HEK293 (cell line): ENCODE measurements at regions of chr1 and their contacts with region 1.

Region 1: GRCh38 chr1:89358287-89358893 is 5.5 kb upstream of the GBP6 start:
- H3K4me3 ChIP-seq: no peak overlapping the region
- H3K27ac ChIP-seq: no peak overlapping the region
- H3K4me1 ChIP-seq: peaks cover 10% of the 10 kb centered on the region
- CTCF ChIP-seq: peak; percentile 78

Region 2: DNA sequence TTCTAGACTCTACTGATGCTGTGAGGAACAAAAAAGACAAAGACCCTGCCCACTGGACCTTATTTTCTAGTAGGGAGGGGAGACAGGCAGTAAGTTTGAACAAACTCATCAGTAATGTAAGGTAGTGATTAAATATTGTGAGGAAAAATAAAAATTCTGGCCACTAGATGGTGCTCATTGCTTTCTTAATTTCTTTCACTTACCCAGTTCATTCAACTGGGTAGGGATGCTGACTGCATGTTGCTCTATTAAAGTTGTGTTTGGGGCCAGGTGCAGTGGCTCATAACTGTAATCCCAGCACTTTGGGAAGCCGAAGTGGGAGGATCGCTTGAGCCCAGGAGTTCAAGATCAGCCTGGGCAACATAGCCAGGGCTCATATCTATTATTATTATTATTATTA is 359.7 kb before region 1 on chr1:
- CTCF ChIA-PET with region 1: interaction called, 18 read pairs
- POLR2A ChIA-PET with region 1: no interaction called
- H3K4me3 ChIP-seq: no peak overlapping the region
- H3K27ac ChIP-seq: no peak overlapping the region
- H3K4me1 ChIP-seq: no peaks in the 10 kb centered on the region
- CTCF ChIP-seq: 0 out of 2 replicates have a peak, but pooled peaks have one; percentile 13